GM23248 (cell line): ENCODE measurements at regions of chr16 and their contacts with region 1.

Region 1: DNA sequence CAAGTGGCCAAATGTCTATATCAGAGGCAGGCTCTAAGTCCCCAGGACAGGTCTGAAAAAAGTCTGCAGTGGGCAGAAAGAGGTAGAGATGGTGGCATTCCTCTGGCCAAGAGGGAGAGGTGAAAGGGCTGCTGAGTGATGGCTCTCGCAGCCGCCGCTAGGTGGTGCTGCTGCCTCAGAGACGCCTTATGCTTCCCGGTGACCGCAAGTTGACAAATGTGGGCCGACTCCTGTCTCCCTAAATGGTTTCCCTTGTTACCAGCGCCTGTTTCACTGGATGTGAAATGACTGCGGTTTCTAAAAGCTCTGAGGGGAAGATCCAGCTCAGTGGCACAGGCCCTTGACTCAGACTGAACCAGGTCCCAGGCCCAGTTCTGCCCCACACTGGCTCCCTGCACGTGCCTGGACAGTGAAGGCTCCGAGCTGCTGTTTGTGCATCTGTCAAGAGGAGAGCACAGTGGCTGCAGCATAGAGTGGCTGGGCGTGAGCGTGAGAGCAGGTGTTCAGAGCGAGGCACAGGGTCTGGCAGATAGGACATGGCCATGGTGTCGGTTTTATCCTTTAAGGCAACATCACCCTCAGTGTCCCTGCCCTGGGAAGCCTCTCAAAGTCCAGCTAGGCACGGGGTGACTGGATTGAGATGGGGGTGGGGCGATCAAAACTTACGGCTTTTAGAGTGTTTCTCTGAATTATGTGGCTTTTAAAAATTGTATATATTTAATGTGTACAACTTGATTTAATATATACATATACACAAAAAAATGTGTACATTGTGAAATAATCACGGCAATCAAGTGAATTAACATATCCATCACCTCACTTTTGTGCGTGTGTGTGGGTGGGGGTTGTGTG is 19.9 kb downstream of the CLEC16A start:
- DNase-seq: peak; percentile 91
- H3K4me3 ChIP-seq: no peak overlapping the region
- H3K27ac ChIP-seq: peak overlapping the region; percentile 53
- H3K4me1 ChIP-seq: peaks cover 23% of the 10 kb centered on the region
- H3K27me3 ChIP-seq: no peaks in the 10 kb centered on the region

Region 2: GRCh38 chr16:11255737-11256660 is 291.7 kb after region 1 on chr16 and contains the start of gene SOCS1:
- in situ Hi-C with region 1: loop called (anchors 10 kb)
- DNase-seq: peak; percentile 91
- H3K4me3 ChIP-seq: peak within 1 kb of the TSS; percentile 78
- H3K27ac ChIP-seq: peak within 1 kb of the TSS; percentile 84
- H3K4me1 ChIP-seq: peaks cover 10% of the 10 kb centered on the region; the same call in 1 of the 2 replicates
- H3K27me3 ChIP-seq: no peaks in the 10 kb centered on the region
- total RNA-seq, gene SOCS1: 1.4 and 2.0 TPM in 2 replicates

Region 3: DNA sequence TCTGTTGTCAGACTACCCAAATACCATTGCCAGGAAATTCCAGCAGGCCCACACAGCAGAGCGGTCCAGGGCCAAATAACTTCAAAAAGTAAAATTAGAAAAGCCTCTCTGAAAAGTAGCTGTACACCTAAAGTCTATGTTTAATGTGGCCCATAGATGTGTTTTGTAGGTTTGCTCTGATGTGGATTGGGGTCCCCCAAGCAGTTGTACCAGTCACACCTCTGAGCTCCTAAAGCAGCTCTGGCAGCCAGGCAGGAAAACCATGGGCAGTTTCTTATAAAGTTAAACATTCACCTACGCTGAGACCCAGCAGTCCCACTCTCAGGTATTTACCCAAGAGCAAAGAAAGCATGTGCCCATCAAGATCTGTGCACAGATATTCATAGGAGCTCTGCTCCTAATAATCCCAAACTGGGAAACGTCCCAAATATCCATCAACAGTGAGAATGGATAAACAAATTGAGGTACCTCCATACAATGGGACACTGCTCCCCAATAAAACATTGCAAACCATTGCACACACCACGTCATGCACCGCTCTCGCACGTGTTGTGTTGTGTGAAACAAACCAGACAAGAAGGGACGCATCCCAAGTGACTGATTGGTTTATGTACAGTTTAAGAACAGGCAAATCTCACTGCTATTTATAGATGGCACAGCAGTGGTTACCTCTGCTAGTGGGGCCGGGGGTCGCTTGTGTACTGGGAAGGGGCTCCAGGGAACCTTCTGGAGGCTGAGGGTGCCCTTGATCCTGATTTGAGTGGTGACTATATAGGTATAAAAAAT is 332.6 kb after region 1 on chr16:
- in situ Hi-C with region 1: no loop called
- DNase-seq: no peak
- H3K4me3 ChIP-seq: peak overlapping the region; percentile 36; the same call in 1 of the 2 replicates
- H3K27ac ChIP-seq: no peak overlapping the region
- H3K4me1 ChIP-seq: peaks cover 9% of the 10 kb centered on the region; the same call in 1 of the 2 replicates
- H3K27me3 ChIP-seq: no peaks in the 10 kb centered on the region

Region 4: GRCh38 chr16:11379420-11379819 is 415.2 kb after region 1 on chr16:
- in situ Hi-C with region 1: loop called (anchors 10 kb)
- DNase-seq: peak; percentile 43
- H3K4me3 ChIP-seq: no peak overlapping the region
- H3K27ac ChIP-seq: no peak overlapping the region
- H3K4me1 ChIP-seq: peaks cover 14% of the 10 kb centered on the region
- H3K27me3 ChIP-seq: no peaks in the 10 kb centered on the region

Region 5: GRCh38 chr16:11689031-11689761 is 724.9 kb after region 1 on chr16:
- in situ Hi-C with region 1: loop called (anchors 25 kb)
- DNase-seq: no peak
- H3K4me3 ChIP-seq: no peak overlapping the region
- H3K27ac ChIP-seq: no peak overlapping the region
- H3K4me1 ChIP-seq: peaks cover 15% of the 10 kb centered on the region
- H3K27me3 ChIP-seq: no peaks in the 10 kb centered on the region